ENCODE measurements at regions of chr17 and their contacts with region 1.

Region 1: GRCh38 chr17:50865984-50866774 is at the start of gene TOB1:
- DNase-seq: peak; percentile 99
- H3K4me3 ChIP-seq: peak within 1 kb of the TSS; percentile 79 to 90
- H3K27ac ChIP-seq: peak within 1 kb of the TSS; percentile 97 to 100
- H3K4me1 ChIP-seq: peaks cover 7 to 30% of the 10 kb centered on the region in 2 experiments; a peak in 2 of 4 replicates
- H3K27me3 ChIP-seq: no peaks in the 10 kb centered on the region
- CTCF ChIP-seq: no peak
- EP300 ChIP-seq: 0 out of 4 replicates have a peak, but pooled peaks of 1 of the 2 experiments have one; percentile 12
- RAD21 ChIP-seq: no peak; the same call in 1 of the 2 replicates
- polyA plus RNA-seq, gene TOB1: 19.3 and 21.8 TPM in 2 replicates

Region 2: GRCh38 chr17:50883850-50884438 is 17.8 kb after region 1 on chr17:
- CTCF ChIA-PET with region 1: interaction called, 7 read pairs
- POLR2A ChIA-PET with region 1: interaction called, 16 read pairs
- DNase-seq: no peak
- H3K4me3 ChIP-seq: no peak overlapping the region
- H3K27ac ChIP-seq: no peak overlapping the region
- H3K4me1 ChIP-seq: no peaks in the 10 kb centered on the region; a peak in 1 of 4 replicates
- H3K27me3 ChIP-seq: no peaks in the 10 kb centered on the region
- CTCF ChIP-seq: no peak
- EP300 ChIP-seq: no peak
- RAD21 ChIP-seq: no peak

Region 3: GRCh38 chr17:50909765-50910605 is 43.8 kb after region 1 on chr17:
- CTCF ChIA-PET with region 1: interaction called, 62 read pairs
- POLR2A ChIA-PET with region 1: interaction called, 166 read pairs
- DNase-seq: no peak
- H3K4me3 ChIP-seq: no peak overlapping the region
- H3K27ac ChIP-seq: no peak overlapping the region
- H3K4me1 ChIP-seq: peaks cover 1 to 22% of the 10 kb centered on the region in 2 experiments; a peak in 3 of 4 replicates
- H3K27me3 ChIP-seq: no peaks in the 10 kb centered on the region
- CTCF ChIP-seq: no peak
- EP300 ChIP-seq: no peak
- RAD21 ChIP-seq: no peak

Region 4: GRCh38 chr17:50944054-50944901 is 78.1 kb after region 1 on chr17:
- CTCF ChIA-PET with region 1: interaction called, 820 read pairs
- POLR2A ChIA-PET with region 1: interaction called, 609 read pairs
- DNase-seq: peak; percentile 92
- H3K4me3 ChIP-seq: peak overlapping the region; percentile 9 to 21; a peak in 3 of 4 replicates
- H3K27ac ChIP-seq: peak overlapping the region; percentile 25 to 85; a peak in 3 of 4 replicates
- H3K4me1 ChIP-seq: peaks cover 10 to 55% of the 10 kb centered on the region in 2 experiments; a peak in 3 of 4 replicates
- H3K27me3 ChIP-seq: no peaks in the 10 kb centered on the region
- CTCF ChIP-seq: no peak
- EP300 ChIP-seq: peak; percentile 29 to 44; a peak in 1 of 4 replicates
- RAD21 ChIP-seq: no peak

Region 5: GRCh38 chr17:51000835-51001638 is 134.9 kb after region 1 on chr17:
- CTCF ChIA-PET with region 1: interaction called, 11 read pairs
- POLR2A ChIA-PET with region 1: interaction called, 11 read pairs
- DNase-seq: peak; percentile 63
- H3K4me3 ChIP-seq: no peak overlapping the region
- H3K27ac ChIP-seq: peak overlapping the region in 1 of 2 experiments; percentile 37; a peak in 2 of 4 replicates
- H3K4me1 ChIP-seq: no peaks in the 10 kb centered on the region
- H3K27me3 ChIP-seq: no peaks in the 10 kb centered on the region
- CTCF ChIP-seq: peak; percentile 89
- EP300 ChIP-seq: no peak
- RAD21 ChIP-seq: peak; percentile 96

Region 6: DNA sequence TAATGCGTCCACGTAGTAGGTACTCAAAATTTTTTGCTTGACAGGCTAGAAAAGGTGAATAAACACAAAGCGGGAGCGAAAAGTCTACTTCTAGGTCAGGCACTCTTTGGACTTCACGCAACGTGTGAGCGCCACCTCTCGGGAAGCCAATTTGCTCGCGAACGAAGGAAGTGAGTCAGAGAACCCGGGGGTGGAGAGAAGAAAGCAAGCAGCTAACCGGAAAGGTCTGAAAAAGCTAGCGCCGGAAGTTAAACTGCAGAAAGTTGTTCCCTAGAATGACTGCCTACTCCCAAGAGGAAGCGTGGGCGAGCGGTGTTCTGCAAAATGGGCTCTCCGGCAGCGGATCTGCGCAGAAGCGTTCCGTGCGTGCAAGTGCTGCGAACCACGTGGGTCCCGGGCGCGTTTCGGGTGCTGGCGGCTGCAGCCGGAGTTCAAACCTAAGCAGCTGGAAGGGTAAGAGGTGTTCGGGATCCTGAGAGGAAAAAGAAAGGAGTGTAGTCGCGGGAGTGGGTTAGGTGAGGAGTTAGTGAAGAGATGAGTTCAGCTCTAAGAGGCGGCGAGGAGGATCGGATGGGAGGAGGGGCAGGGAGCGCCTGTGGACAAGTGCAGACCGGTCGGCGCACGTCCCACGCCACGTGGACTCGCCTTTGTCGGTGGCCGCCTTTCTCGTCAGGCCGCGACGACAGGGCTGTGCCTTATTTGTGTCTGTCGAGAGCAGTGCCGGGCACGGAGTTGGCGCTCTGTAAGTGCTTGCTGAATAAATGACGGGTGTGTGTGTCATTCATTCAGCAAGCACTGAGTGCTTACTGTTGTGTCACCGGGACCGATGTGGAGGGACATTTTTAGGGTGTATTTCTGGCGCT is 287.3 kb after region 1 on chr17 and contains the start of gene NME1:
- CTCF ChIA-PET with region 1: interaction called, 7 read pairs
- POLR2A ChIA-PET with region 1: interaction called, 10 read pairs
- DNase-seq: peak; percentile 96
- H3K4me3 ChIP-seq: peak within 1 kb of the TSS; percentile 69 to 72
- H3K27ac ChIP-seq: peak within 1 kb of the TSS; percentile 81 to 94
- H3K4me1 ChIP-seq: peaks cover 9 to 11% of the 10 kb centered on the region in 2 experiments; a peak in 3 of 4 replicates
- H3K27me3 ChIP-seq: no peaks in the 10 kb centered on the region
- CTCF ChIP-seq: peak; percentile 99
- EP300 ChIP-seq: peak; percentile 52 to 76; a peak in 3 of 4 replicates
- RAD21 ChIP-seq: peak; percentile 98
- polyA plus RNA-seq, gene NME1: 654 and 658 TPM in 2 replicates

Measured in SK-N-SH (cell line).